ENCODE measurements at regions of chr16 and their contacts with region 1.

Region 1: DNA sequence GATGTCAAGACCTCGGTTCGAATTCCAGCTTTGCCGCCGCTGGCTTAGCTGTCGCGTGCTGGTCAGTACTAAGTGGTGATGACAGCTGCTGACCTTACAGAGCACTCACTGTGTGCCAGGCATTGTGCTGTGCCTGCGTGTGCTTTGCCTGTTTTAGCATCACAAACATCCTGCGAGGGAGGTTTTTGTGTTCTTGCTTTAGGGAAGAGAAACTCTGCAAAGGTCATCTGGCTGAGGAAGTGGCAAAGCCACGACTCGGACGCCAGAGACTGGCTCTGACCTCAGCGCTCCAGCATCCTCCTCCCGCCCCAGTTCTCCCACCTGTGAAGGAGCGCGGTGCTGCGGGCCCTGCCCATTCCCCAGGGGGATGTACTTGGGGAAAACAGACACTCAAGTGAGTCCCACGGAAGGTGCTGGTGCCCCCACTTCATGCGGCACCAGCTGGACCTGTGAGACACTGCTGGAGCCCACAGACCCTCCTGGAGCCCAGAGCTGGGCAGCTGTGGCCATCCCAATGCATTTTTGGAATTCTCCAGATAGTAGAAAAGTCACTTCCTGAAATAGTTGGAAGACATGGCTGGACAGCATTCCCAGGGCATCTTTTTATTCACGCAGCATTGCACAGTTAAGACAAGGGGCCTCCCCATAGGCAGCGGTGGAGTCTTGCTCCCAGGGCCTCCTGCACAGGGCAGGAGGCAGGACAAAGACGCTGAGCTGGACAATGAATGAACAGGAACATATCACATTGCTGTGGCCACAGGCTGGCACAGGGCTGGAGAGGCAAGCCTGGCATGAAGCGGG is 20.0 kb upstream of the HERPUD1 start:
- DNase-seq: peak in 4 of 5 donors; percentile 46 to 70 (median 56)
- ATAC-seq: peak; percentile 53 to 84 (median 70)
- H3K4me3 ChIP-seq: no peak overlapping the region
- H3K27ac ChIP-seq: peak overlapping the region in 11 of 12 donors; percentile 25 to 85 (median 55)
- H3K4me1 ChIP-seq: peaks cover 0 to 67% (median 32%) of the 10 kb centered on the region in 12 donors
- H3K27me3 ChIP-seq: no peaks in the 10 kb centered on the region
- CTCF ChIP-seq: no peak
- POLR2A ChIP-seq: no peak

Region 2: GRCh38 chr16:56851671-56852400 is 60.1 kb before region 1 on chr16:
- intact Hi-C with region 1: no loop called
- DNase-seq: peak in 1 of 5 donors; percentile 1
- ATAC-seq: no peak
- H3K4me3 ChIP-seq: no peak overlapping the region
- H3K27ac ChIP-seq: no peak overlapping the region
- H3K4me1 ChIP-seq: peaks cover 0 to 29% (median 14%) of the 10 kb centered on the region in 12 donors
- H3K27me3 ChIP-seq: no peaks in the 10 kb centered on the region
- CTCF ChIP-seq: no peak
- POLR2A ChIP-seq: no peak

Region 3: GRCh38 chr16:56931892-56932720 is 20.1 kb after region 1 on chr16 and contains the start of gene HERPUD1:
- intact Hi-C with region 1: loop called in 1 of 10 experiments (anchors 2 kb)
- DNase-seq: peak; percentile 99 to 100 (median 99)
- ATAC-seq: peak; percentile 95 to 97 (median 96)
- H3K4me3 ChIP-seq: peak within 1 kb of the TSS; percentile 64 to 100 (median 94)
- H3K27ac ChIP-seq: peak within 1 kb of the TSS; percentile 96 to 100 (median 99)
- H3K4me1 ChIP-seq: peaks cover 0 to 49% (median 39%) of the 10 kb centered on the region in 12 donors
- H3K27me3 ChIP-seq: no peaks in the 10 kb centered on the region
- CTCF ChIP-seq: peak in 6 of 12 donors; percentile 4 to 24 (median 10)
- POLR2A ChIP-seq: peak; percentile 84 to 94
- total RNA-seq, gene HERPUD1: 86.9 to 197 (median 117) TPM

Measured in heart left ventricle (tissue), 16 donors.